Activated CD4-positive, alpha-beta T cell treated with anti-CD3 and anti-CD28 coated beads, Interleukin-2, amount 10 ng/mL, durations not matched to agents 24 days and 14 days (primary cell): ENCODE measurements at regions of chr21 and their contacts with region 1.

Region 1: GRCh38 chr21:29372063-29372802 is 73.5 kb downstream of the BACH1 start:
- DNase-seq: peak; percentile 89
- H3K4me3 Mint-ChIP-seq: no peak overlapping the region
- H3K27ac Mint-ChIP-seq: peak overlapping the region; percentile 57
- H3K4me1 Mint-ChIP-seq: peaks cover 18% of the 10 kb centered on the region
- H3K27me3 Mint-ChIP-seq: no peaks in the 10 kb centered on the region

Region 2: GRCh38 chr21:29164325-29164942 is 207.8 kb before region 1 on chr21:
- intact Hi-C with region 1: loop called (anchors 1 kb)
- DNase-seq: no peak
- H3K4me3 Mint-ChIP-seq: no peak overlapping the region
- H3K27ac Mint-ChIP-seq: no peak overlapping the region
- H3K4me1 Mint-ChIP-seq: peaks cover 3% of the 10 kb centered on the region
- H3K27me3 Mint-ChIP-seq: peaks cover 4% of the 10 kb centered on the region

Region 3: DNA sequence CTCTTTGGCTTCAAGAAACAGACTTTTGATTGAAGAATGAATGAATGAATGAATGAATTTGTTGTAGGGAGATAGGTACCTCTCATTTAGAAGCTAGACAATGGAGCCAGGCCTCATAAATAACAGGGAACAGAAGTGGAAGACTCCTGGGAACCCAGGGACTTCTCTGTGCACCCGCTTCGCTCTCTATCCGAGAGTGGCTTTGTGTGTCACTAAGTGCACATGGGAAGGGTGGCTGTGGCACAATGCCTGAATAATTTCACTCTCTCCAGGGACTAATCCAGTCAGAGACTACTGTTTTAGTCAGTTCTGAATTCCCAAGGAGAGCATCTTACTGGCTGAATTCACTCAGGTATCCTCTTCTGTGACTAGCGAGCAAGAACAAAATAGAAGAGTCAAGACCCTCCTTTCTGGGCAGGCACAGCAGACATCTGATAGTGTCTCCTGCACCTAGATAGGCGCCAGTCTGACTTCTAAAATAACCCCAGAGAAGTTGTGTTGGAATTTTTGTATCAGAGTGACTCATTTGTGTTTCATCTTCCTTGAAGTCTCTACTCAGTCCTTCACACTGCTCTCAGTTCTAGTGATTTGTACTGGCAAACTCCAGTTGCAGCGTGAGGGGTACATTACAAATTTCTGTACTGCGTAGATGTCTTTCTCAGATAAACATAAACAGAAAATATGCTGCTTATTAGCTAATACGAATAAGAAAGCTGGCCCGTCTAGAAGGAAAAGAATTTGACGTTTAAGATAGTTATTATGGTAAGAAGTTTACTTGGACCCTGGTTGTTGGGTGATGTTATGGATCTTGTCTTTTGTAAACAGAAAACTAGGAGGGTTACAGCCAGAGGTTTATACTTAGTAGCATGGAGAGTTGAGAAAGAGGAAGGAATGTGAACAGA is 39.5 kb before region 1 on chr21:
- intact Hi-C with region 1: loop called (anchors 5 kb)
- DNase-seq: no peak
- H3K4me3 Mint-ChIP-seq: no peak overlapping the region
- H3K27ac Mint-ChIP-seq: no peak overlapping the region
- H3K4me1 Mint-ChIP-seq: peaks cover 12% of the 10 kb centered on the region
- H3K27me3 Mint-ChIP-seq: no peaks in the 10 kb centered on the region

Region 4: DNA sequence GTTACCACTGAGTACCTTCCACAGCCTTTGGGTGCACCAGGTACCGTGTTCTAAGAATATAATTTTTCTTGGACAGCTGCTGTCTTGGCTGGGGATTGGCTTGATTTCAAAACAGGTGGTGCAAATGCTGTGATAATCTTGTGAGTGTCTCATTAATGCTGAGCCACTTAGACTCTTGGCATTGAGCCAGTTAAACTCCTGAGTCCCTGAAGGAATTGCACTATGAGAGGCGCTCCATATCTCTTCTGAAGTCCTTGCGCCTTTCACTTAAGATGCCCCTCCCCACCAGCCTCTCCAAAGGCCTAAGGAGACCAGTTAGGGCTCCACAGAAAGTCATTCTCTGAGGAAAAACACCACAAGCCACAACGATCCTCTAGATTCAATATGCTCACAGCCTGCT is 22.5 kb before region 1 on chr21:
- intact Hi-C with region 1: loop called (anchors 2 kb)
- DNase-seq: no peak
- H3K4me3 Mint-ChIP-seq: no peak overlapping the region
- H3K27ac Mint-ChIP-seq: no peak overlapping the region
- H3K4me1 Mint-ChIP-seq: peaks cover 18% of the 10 kb centered on the region
- H3K27me3 Mint-ChIP-seq: no peaks in the 10 kb centered on the region